ENCODE measurements at regions of chr22 and their contacts with region 1.

Region 1: DNA sequence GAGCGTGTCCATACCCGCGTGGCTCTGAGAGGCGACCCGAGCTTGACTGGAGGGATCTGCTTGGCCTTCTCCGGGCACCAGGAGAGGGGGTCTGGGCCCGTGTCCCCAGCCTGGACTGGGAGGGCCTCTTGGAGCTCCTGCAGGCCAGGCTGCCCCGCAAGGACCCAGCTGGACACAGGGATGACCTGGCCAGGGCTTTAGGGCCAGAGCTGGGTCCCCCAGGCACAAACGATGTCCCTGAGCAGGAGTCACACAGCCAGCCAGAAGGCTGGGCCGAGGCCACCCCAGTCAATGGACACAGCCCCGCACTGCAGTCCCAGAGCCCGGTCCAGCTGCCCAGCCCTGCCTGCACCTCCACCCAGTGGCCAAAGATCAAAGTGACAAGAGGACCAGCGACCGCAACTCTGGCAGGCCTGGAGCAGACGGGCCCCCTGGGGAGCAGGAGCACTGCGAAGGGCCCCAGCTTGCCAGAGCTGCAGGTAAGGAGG is 38.2 kb downstream of the TRIOBP start:
- H3K4me3 Mint-ChIP-seq: no peak overlapping the region
- H3K27ac Mint-ChIP-seq: peak overlapping the region; percentile 23
- H3K4me1 Mint-ChIP-seq: peaks cover 60% of the 10 kb centered on the region
- H3K27me3 Mint-ChIP-seq: no peaks in the 10 kb centered on the region

Region 2: DNA sequence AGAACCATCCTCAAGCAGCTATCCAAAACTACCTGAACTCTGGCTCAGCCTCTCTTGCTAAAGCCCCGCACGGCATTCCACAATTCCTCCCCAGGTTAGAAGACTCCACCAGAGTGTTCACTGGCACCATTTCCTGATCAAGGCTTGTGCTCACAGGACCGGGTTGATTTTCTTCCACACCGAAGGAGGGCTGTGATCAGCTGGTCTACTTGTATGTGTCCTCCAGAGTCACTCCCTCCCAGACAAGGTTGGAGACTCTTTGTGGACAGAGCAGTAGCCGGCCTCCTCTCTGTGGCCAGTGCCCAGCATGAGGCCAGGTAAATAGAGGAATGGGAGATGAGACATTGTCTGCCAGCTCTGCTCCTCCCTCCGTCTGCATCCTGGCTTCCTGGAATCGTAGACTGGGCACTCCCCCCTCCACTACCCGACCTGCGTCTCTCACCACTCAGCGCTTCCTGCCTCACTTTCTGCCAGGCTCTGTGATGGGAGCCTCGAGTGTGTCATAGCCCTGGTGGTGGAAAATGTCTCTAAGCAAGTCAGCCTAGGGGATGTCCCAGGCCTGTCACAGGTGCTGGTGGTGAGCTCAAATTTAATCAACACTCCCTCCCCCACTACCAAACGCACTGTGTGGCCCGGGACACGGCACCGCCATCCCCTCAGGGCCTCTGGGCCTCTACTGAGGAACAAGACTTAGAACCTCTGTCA is 613.0 kb before region 1 on chr22:
- intact Hi-C with region 1: no loop called
- H3K4me3 Mint-ChIP-seq: no peak overlapping the region
- H3K27ac Mint-ChIP-seq: peak overlapping the region; percentile 13
- H3K4me1 Mint-ChIP-seq: peaks cover 5% of the 10 kb centered on the region
- H3K27me3 Mint-ChIP-seq: peaks cover 15% of the 10 kb centered on the region

Region 3: DNA sequence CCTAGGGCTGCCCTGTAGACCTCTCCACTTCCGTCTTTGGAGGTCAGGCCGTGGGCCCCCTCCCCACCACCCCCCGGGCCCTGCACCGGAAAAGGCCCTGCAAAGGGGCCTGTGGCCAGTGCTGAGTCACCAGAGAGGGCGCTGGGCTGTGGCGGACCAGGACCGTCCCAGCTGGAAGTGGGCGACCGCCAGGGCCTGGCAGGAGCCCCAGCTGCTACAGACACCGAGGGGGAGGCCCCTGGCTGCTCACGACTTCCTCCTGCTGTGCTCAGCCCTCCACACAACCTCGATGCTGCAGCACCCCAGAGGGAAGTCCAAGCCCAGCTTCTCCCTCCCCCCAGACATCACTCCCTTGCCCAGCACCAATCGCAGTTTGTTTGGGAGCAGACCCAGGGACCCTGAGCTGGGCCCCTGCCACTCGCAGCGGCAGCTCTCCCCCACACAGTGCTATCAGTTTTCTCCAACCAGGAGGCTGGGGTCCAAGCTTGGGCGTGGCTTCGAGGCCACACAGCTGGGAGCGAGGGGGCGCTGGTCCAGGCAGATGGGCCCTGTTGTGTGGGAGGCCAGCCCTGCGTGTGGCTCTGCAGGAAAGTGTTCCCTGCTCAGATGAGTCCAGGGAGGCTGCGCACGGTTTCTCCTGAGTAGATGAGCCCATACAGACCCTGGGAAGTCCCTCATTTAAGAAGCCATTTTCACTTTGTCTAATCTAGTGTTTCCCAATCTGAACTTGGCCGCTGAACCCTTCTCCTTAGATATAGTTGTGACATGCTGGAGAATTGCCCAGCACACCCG is 101.2 kb before region 1 on chr22:
- intact Hi-C with region 1: loop called (anchors 10 kb)
- H3K4me3 Mint-ChIP-seq: peak overlapping the region; percentile 62
- H3K27ac Mint-ChIP-seq: peak overlapping the region; percentile 87
- H3K4me1 Mint-ChIP-seq: peaks cover 82% of the 10 kb centered on the region
- H3K27me3 Mint-ChIP-seq: no peaks in the 10 kb centered on the region

Region 4: GRCh38 chr22:37696657-37697537 is 38.1 kb before region 1 on chr22 and contains the start of gene TRIOBP:
- intact Hi-C with region 1: loop called (anchors 5 kb)
- H3K4me3 Mint-ChIP-seq: peak within 1 kb of the TSS; percentile 57
- H3K27ac Mint-ChIP-seq: peak within 1 kb of the TSS; percentile 37
- H3K4me1 Mint-ChIP-seq: peaks cover 31% of the 10 kb centered on the region
- H3K27me3 Mint-ChIP-seq: peaks cover 3% of the 10 kb centered on the region

Region 5: GRCh38 chr22:37745548-37746365 is 10.7 kb after region 1 on chr22:
- intact Hi-C with region 1: no loop called
- H3K4me3 Mint-ChIP-seq: peak overlapping the region; percentile 84
- H3K27ac Mint-ChIP-seq: peak overlapping the region; percentile 81
- H3K4me1 Mint-ChIP-seq: peaks cover 79% of the 10 kb centered on the region
- H3K27me3 Mint-ChIP-seq: no peaks in the 10 kb centered on the region

Region 6: DNA sequence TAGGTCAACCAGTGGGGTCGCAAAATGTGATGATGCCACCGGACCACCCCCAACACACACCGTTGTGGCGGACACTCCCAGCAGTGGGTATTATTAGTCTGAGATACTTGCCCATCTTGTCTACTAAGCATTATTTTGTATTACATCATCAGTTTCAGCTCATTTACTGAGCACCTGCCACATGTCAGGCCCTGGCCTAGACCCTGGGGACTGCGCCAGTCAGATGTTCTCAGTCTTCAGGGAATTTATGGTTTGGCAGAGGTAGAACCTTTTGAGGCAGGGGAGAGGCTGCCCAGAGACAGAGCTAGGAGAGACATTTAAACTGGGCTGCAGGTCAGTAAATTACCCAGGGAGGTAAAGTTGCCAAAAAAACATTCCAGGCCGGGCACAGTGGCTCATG is 29.6 kb after region 1 on chr22:
- intact Hi-C with region 1: no loop called
- H3K4me3 Mint-ChIP-seq: no peak overlapping the region
- H3K27ac Mint-ChIP-seq: no peak overlapping the region
- H3K4me1 Mint-ChIP-seq: no peaks in the 10 kb centered on the region
- H3K27me3 Mint-ChIP-seq: no peaks in the 10 kb centered on the region